ENCODE measurements at regions of chr22 and their contacts with region 1.

Region 1: GRCh38 chr22:25109878-25110595 is 89.6 kb upstream of the CRYBB3 start:
- DNase-seq: no peak
- H3K4me3 ChIP-seq: no peak overlapping the region
- CTCF ChIP-seq: no peak
- POLR2A ChIP-seq: no peak

Region 2: GRCh38 chr22:25153961-25154666 is 44.1 kb after region 1 on chr22:
- intact Hi-C with region 1: no loop called
- DNase-seq: peak in 1 of 2 donors; percentile 82
- H3K4me3 ChIP-seq: no peak overlapping the region
- CTCF ChIP-seq: no peak
- POLR2A ChIP-seq: no peak

Region 3: DNA sequence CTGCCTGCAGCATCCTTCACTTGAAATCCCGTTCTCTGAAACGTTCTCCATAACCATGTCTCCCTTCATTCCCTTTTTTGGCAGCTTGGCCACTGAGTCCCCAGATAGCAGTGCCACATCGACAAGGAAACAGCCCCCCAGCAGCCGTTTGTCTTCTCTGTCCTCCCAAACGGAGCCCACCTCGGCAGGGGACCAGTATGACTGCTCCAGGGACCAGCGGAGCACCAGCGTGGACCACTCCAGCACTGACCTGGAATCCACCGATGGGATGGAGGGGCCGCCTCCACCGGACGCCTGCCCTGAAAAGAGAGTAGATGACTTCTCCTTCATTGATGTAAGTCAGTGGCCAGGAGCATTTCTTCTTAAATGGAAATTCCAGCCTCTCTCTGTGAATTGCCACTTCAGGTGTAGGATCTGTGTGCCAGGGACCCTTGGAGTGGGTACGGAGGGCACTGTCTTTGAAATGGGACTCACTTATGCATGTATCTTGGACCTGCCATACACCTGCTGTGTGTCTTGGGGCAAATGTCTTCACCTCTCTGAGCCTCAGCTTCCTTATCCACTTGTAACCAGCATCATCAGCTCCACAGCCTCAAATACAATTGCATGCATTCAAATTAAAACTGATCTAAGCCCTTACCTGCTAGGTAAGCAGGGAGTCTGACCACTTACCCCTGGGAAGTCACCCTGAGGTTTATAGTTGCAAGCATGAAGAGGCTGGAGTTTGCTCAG is 64.3 kb after region 1 on chr22:
- intact Hi-C with region 1: loop called (anchors 2 kb)
- DNase-seq: no peak
- H3K4me3 ChIP-seq: no peak overlapping the region
- CTCF ChIP-seq: no peak
- POLR2A ChIP-seq: no peak

Measured in lower leg skin (tissue), 4 donors.